Caco-2 (cell line): ENCODE measurements at regions of chr5 and their contacts with region 1.

Region 1: GRCh38 chr5:122774861-122775549 is at the start of gene SNX2:
- DNase-seq: peak; percentile 90 to 94
- H3K4me3 ChIP-seq: peak within 1 kb of the TSS; percentile 94
- H3K4me3 Mint-ChIP-seq: peak within 1 kb of the TSS; percentile 96
- H3K27ac Mint-ChIP-seq: peak within 1 kb of the TSS; percentile 2
- H3K4me1 ChIP-seq: peaks cover 52% of the 10 kb centered on the region
- H3K4me1 Mint-ChIP-seq: peaks cover 57% of the 10 kb centered on the region
- H3K27me3 ChIP-seq: no peaks in the 10 kb centered on the region
- H3K27me3 Mint-ChIP-seq: no peaks in the 10 kb centered on the region
- CTCF ChIP-seq: peak; percentile 22 to 28
- total RNA-seq, gene SNX2: 115 and 123 TPM in 2 replicates

Region 2: DNA sequence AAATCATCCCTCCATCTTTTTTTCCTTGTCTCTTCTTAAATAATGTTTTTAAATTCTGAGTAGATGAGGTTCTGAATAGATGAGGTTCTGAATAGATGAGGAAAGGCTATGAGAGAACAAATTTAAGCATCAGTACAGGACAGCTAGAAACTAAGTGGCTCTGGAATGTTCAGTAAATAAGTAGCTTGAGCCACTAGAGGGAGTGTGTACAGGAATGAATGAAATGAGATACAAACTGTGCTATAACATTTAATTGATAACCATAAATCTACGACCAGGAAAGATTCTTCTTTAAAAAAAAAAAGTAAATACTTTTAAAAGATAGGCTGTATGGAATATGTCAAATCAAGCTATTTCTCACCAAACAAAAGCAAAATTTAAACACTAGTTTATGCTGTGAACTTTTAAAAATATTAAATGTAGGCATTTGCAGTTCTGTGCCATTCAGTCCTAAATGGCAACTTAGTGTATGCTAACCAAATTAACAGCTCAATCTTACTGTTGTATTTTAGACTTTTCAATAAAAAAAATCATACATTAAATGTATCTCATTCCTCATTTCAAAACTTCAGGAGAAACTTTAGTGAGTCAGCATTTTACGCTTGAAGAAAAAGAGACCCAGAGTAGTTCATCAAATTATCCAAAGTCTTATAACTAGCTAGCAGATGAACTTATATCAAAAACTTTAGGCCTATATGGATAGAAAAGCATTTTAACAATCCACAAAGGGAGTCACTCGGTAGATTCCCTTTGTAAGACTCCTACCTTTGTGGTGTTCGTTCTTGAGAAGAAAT is 70.6 kb before region 1 on chr5:
- CTCF ChIA-PET with region 1: no interaction called
- POLR2A ChIA-PET with region 1: no interaction called
- intact Hi-C with region 1: loop called (anchors 1 kb)
- DNase-seq: peak in 1 of 2 experiments; percentile 48
- H3K4me3 ChIP-seq: no peak overlapping the region
- H3K4me3 Mint-ChIP-seq: no peak overlapping the region
- H3K27ac Mint-ChIP-seq: no peak overlapping the region
- H3K4me1 ChIP-seq: peaks cover 19% of the 10 kb centered on the region
- H3K4me1 Mint-ChIP-seq: peaks cover 8% of the 10 kb centered on the region
- H3K27me3 ChIP-seq: no peaks in the 10 kb centered on the region
- H3K27me3 Mint-ChIP-seq: no peaks in the 10 kb centered on the region
- CTCF ChIP-seq: peak; percentile 71 to 75

Region 3: GRCh38 chr5:122759302-122760100 is 15.5 kb before region 1 on chr5:
- CTCF ChIA-PET with region 1: no interaction called
- POLR2A ChIA-PET with region 1: no interaction called
- intact Hi-C with region 1: loop called (anchors 1 kb)
- DNase-seq: no peak
- H3K4me3 ChIP-seq: no peak overlapping the region
- H3K4me3 Mint-ChIP-seq: no peak overlapping the region
- H3K27ac Mint-ChIP-seq: peak overlapping the region; percentile 76
- H3K4me1 ChIP-seq: peaks cover 27% of the 10 kb centered on the region
- H3K4me1 Mint-ChIP-seq: peaks cover 35% of the 10 kb centered on the region
- H3K27me3 ChIP-seq: no peaks in the 10 kb centered on the region
- H3K27me3 Mint-ChIP-seq: no peaks in the 10 kb centered on the region
- CTCF ChIP-seq: no peak